Head of caudate nucleus (tissue), 42 donors: ENCODE measurements at regions of chr9 and their contacts with region 1.

Region 1: GRCh38 chr9:133048569-133048968 is 13.2 kb upstream of the CEL start:
- DNase-seq: peak; percentile 29 to 82 (median 62)

Region 2: GRCh38 chr9:133098104-133098890 is 49.7 kb after region 1 on chr9:
- intact Hi-C with region 1: loop called (anchors 5 kb)
- DNase-seq: peak in 2 of 42 donors; percentile 9 to 24

Region 3: DNA sequence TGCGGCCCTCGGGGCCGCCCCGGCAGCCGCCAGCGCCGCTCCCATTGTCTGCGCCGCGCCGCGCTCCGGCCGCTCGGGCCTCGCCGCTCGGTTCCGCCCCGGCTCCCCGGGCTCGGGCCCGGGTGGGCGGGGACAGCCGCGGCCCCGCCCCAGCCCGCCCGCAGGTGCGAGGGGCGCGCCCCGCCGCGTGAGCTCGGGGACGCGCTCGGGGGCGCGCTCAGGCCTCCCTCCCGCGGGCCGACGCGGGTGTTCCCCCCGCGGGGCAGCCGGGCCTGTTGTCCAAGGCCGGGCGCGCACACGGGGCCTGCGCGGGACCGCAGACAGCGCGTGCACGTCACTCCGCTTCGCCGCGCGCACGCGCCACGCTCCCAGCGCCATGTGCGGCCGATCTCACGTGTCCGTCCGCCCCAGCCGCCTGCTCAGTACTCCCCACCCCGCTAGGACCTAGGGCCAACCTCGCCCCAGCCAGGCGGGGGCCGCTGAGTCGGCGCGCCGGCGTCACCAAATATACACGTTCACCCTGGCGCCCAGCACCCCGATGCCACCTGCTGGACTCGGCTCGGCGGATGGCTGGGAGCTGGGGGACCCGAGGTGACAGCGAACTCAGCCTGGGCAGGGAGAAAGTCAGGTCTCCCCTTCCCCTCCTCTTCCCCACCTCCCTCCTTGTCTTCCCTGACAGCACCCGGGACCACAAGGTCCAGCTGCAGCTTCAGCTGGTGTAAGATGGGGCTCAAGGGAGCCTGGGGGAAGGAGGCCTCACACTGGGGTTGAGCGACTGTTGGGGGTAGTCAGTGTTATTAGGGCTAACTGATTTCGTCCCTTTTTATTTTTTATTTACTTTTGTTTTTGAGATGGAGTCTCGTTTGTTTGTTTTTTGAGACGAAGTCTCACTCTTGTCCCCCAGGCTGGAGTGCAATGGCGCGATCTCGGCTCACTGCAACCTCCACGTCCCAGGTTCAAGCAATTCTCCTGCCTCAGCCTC is 100.8 kb after region 1 on chr9:
- intact Hi-C with region 1: loop called (anchors 5 kb)
- DNase-seq: peak; percentile 71 to 95 (median 86)